ENCODE measurements at regions of chr5 and their contacts with region 1.

Region 1: GRCh38 chr5:134527146-134527960 is 1.9 kb downstream of the JADE2 start:
- DNase-seq: peak; percentile 63
- H3K4me3 Mint-ChIP-seq: peak overlapping the region; percentile 99
- H3K27ac Mint-ChIP-seq: peak overlapping the region; percentile 95
- H3K4me1 Mint-ChIP-seq: peaks cover 38% of the 10 kb centered on the region
- H3K27me3 Mint-ChIP-seq: peaks cover 2% of the 10 kb centered on the region

Region 2: GRCh38 chr5:134004592-134005375 is 522.6 kb before region 1 on chr5 and contains the start of gene VDAC1:
- intact Hi-C with region 1: loop called (anchors 1 kb)
- DNase-seq: peak; percentile 78
- H3K4me3 Mint-ChIP-seq: peak within 1 kb of the TSS; percentile 93
- H3K27ac Mint-ChIP-seq: peak within 1 kb of the TSS; percentile 97
- H3K4me1 Mint-ChIP-seq: peaks cover 53% of the 10 kb centered on the region
- H3K27me3 Mint-ChIP-seq: peaks cover 2% of the 10 kb centered on the region
- total RNA-seq, gene VDAC1: 440 and 442 TPM in 2 replicates

Region 3: GRCh38 chr5:134304311-134304710 is 223.0 kb before region 1 on chr5:
- intact Hi-C with region 1: no loop called
- DNase-seq: no peak
- H3K4me3 Mint-ChIP-seq: no peak overlapping the region
- H3K27ac Mint-ChIP-seq: no peak overlapping the region
- H3K4me1 Mint-ChIP-seq: no peaks in the 10 kb centered on the region
- H3K27me3 Mint-ChIP-seq: peaks cover 2% of the 10 kb centered on the region

Region 4: DNA sequence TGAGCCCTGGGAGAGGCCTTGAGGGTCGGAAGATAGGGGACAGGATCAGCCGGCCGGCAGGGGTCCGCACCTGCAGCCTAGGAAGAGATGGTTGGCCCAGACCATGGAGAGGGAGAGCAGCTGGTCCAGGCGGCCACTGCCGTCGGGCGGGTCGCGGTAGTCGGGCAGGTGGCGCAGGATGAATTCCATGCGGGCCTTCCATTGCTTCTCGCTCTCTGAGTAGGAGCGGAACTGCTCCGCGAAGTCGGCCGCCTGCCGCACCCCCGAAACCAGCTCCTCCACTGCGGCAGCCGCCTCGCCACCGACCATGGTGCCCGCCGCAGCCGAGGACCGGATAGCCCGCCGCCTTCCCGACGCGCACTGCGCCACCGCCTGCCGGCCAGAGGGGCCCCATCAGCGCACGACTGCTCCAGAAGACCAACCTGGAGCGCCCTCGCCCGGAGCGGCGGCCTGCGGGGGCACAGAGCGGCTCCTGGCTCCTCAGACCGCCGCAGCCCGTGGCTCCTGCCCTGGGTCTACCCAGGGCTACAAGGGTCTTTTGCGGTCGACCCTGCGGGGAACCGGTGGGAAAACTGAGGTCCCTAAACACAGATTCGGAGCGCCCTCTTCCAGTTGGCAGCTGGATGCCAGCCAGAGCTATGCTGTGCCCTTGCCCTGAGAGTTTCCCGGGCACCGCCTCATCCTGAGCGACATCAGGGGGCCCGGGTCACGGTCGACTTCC is 115.6 kb before region 1 on chr5 and contains the start of gene CDKN2AIPNL:
- intact Hi-C with region 1: loop called (anchors 1 kb)
- DNase-seq: peak; percentile 87
- H3K4me3 Mint-ChIP-seq: peak within 1 kb of the TSS; percentile 97
- H3K27ac Mint-ChIP-seq: peak within 1 kb of the TSS; percentile 90
- H3K4me1 Mint-ChIP-seq: peaks cover 26% of the 10 kb centered on the region
- H3K27me3 Mint-ChIP-seq: no peaks in the 10 kb centered on the region
- total RNA-seq, gene CDKN2AIPNL: 33.6 and 35.6 TPM in 2 replicates

Region 5: DNA sequence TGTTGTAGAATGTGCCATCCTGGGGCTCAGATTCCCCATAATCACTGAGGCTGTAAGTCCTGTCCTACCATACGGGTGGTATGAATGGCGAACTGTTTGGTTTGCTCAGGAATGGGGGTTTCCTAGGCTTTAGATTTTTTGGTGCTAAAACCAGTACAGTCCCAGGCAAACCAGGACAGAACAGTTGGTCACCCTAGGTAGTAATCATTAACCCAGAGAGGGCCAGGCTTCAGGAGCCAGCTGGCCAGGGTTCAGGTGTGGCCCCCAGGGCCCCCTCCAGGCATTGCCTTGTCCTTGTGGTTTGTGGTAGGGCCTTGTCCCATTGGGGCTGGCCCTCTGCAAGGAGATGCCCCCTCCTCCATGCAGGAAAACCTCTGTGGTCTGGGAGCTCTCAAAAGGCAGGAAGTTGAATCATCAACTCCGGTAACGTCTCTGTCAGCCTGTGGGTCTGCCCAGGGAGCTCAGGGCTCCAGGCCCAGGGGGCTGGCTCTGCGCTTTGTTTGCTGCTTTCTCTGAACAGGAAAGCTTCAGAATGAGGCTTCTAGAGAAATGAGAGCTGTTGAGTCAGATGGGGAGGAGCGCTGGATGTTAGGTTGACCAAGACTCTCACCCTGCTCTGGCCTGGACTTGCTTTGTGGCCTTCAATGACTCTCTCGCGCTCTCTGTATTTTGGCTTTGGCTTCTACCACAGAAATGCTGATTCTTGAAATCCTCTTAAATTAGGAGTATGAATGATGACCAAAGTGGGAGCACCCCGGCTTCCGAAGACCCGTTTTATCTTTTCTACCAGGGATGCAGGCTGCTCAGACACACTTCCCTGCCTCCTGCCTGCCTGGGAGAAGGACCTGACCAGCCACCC is 24.0 kb before region 1 on chr5:
- intact Hi-C with region 1: loop called (anchors 1 kb)
- DNase-seq: peak; percentile 71
- H3K4me3 Mint-ChIP-seq: peak overlapping the region; percentile 60
- H3K27ac Mint-ChIP-seq: peak overlapping the region; percentile 96
- H3K4me1 Mint-ChIP-seq: peaks cover 46% of the 10 kb centered on the region
- H3K27me3 Mint-ChIP-seq: no peaks in the 10 kb centered on the region

Region 6: DNA sequence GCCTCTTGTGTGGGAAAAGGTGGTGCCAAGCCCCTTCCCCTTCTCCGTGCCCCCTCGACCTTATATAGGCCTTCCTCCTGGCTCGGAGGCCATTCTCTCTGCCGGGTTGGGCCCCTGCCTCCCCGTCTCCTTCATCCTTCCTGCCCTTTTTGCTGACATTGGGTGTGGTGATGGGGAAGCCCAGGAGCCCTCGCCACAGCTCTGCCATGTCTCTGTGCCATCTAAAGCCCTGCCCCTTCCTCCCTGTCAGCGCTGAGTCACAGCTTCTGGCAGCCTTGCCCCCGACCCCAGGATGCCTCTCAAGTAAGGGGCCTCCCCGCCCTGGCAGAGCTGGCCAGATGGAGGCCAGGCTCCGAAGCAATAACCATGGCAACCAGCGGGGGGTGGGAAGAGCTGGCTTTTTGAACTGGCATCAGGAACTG is 28.5 kb after region 1 on chr5:
- intact Hi-C with region 1: loop called (anchors 1 kb)
- DNase-seq: peak; percentile 68
- H3K4me3 Mint-ChIP-seq: peak overlapping the region; percentile 76
- H3K27ac Mint-ChIP-seq: peak overlapping the region; percentile 97
- H3K4me1 Mint-ChIP-seq: peaks cover 33% of the 10 kb centered on the region
- H3K27me3 Mint-ChIP-seq: no peaks in the 10 kb centered on the region

Region 7: DNA sequence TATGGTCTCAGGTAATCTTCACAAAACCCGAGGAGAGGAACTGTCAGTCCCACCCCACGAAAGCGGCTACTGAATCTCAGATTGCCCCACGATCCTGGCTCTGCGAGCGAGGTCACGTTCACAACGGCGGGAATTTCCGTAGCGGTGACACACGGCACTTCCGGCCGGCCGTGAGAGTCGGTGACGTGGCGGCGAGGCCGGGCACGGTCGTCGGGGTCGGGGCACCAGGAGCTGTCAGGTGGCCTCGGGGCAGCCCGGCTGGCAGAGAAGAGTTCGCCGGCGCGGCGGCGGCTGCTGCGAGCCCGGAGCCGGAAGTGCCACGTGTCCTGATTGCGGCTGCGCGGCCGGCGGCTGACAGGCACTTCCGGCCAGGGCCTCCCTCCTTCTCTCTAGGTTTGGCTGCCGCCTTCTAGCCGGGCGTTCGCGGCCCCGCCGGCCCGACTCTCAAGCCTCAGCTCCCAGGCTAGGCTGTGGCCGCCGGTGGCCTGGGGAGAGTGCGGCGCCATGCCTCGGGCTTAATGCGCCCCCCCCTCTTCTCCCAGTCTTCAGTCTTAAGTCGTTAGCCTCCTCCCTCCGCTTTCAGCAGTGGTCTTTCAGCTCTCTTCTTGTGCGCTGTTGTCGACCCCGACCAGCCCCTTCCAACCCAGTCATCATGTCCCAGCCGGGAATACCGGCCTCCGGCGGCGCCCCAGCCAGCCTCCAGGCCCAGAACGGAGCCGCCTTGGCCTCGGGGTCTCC is 121.2 kb after region 1 on chr5 and contains the start of gene SEC24A:
- intact Hi-C with region 1: loop called (anchors 1 kb)
- DNase-seq: peak; percentile 89
- H3K4me3 Mint-ChIP-seq: peak within 1 kb of the TSS; percentile 87
- H3K27ac Mint-ChIP-seq: peak within 1 kb of the TSS; percentile 94
- H3K4me1 Mint-ChIP-seq: peaks cover 32% of the 10 kb centered on the region
- H3K27me3 Mint-ChIP-seq: no peaks in the 10 kb centered on the region
- total RNA-seq, gene SEC24A: 26.5 and 27.2 TPM in 2 replicates

Region 8: GRCh38 chr5:134845852-134846640 is 318.7 kb after region 1 on chr5 and contains the start of gene C5orf24:
- intact Hi-C with region 1: loop called (anchors 10 kb)
- DNase-seq: peak; percentile 90
- H3K4me3 Mint-ChIP-seq: peak within 1 kb of the TSS; percentile 97
- H3K27ac Mint-ChIP-seq: peak within 1 kb of the TSS; percentile 97
- H3K4me1 Mint-ChIP-seq: peaks cover 25% of the 10 kb centered on the region
- H3K27me3 Mint-ChIP-seq: no peaks in the 10 kb centered on the region
- total RNA-seq, gene C5orf24: 42.2 and 43.2 TPM in 2 replicates

Measured in activated T-helper 1 cell treated with anti-CD3 and anti-CD28 coated beads, Interleukin-12 subunit alpha, Interleukin-12 subunit beta, Interleukin-2, Interleukin-4 antibody, amounts not matched to agents 30 ng/mL and 10 ng/mL and 1 ng/mL, durations not matched to agents 14 hours and 24 hours and 36 hours (primary cell).